IMR-90 (cell line): ENCODE measurements at regions of chr15 and their contacts with region 1.

Region 1: GRCh38 chr15:42548253-42549031 is at the starts of genes HAUS2 and LRRC57:
- DNase-seq: peak; percentile 78
- ATAC-seq: peak; percentile 93
- H3K4me3 ChIP-seq: peak within 1 kb of the TSS; percentile 85
- H3K27ac ChIP-seq: peak within 1 kb of the TSS; percentile 84
- H3K4me1 ChIP-seq: peaks cover 6% of the 10 kb centered on the region
- H3K27me3 ChIP-seq: no peaks in the 10 kb centered on the region
- CTCF ChIP-seq: no peak
- POLR2A ChIP-seq: peak; percentile 73
- RAD21 ChIP-seq: no peak
- total RNA-seq, gene HAUS2: 22.4 and 29.2 TPM in 2 replicates
- total RNA-seq, gene LRRC57: 9.5 and 10.0 TPM in 2 replicates

Region 2: GRCh38 chr15:42495361-42496212 is 52.9 kb before region 1 on chr15 and contains the start of gene SNAP23:
- CTCF ChIA-PET with region 1: no interaction called
- POLR2A ChIA-PET with region 1: no interaction called
- dilution Hi-C with region 1: no loop called
- in situ Hi-C with region 1: no loop called
- intact Hi-C with region 1: loop called (anchors 1 kb)
- DNase-seq: peak; percentile 96
- ATAC-seq: peak; percentile 92
- H3K4me3 ChIP-seq: peak within 1 kb of the TSS; percentile 83
- H3K27ac ChIP-seq: peak within 1 kb of the TSS; percentile 73
- H3K4me1 ChIP-seq: peaks cover 10% of the 10 kb centered on the region
- H3K27me3 ChIP-seq: no peaks in the 10 kb centered on the region
- CTCF ChIP-seq: no peak
- POLR2A ChIP-seq: peak; percentile 92
- RAD21 ChIP-seq: no peak
- total RNA-seq, gene SNAP23: 36.0 and 72.5 TPM in 2 replicates